Esophagus muscularis mucosa (tissue), 4 donors: ENCODE measurements at regions of chr21 and their contacts with region 1.

Region 1: GRCh38 chr21:40143822-40144525 is 276.7 kb downstream of the PCP4 start:
- DNase-seq: no peak
- H3K4me3 ChIP-seq: no peak overlapping the region
- H3K27ac ChIP-seq: no peak overlapping the region
- H3K4me1 ChIP-seq: peaks cover 0 to 8% (median 2%) of the 10 kb centered on the region in 4 donors
- H3K27me3 ChIP-seq: no peaks in the 10 kb centered on the region
- CTCF ChIP-seq: peak; percentile 71 to 79 (median 76)
- EP300 ChIP-seq: no peak
- POLR2A ChIP-seq: no peak

Region 2: GRCh38 chr21:40385892-40386599 is 242.1 kb after region 1 on chr21:
- intact Hi-C with region 1: loop called (anchors 2 kb)
- DNase-seq: no peak
- H3K4me3 ChIP-seq: peak overlapping the region in 1 of 4 donors; percentile 2
- H3K27ac ChIP-seq: no peak overlapping the region
- H3K4me1 ChIP-seq: peaks cover 0 to 16% (median 10%) of the 10 kb centered on the region in 4 donors
- H3K27me3 ChIP-seq: no peaks in the 10 kb centered on the region
- CTCF ChIP-seq: peak; percentile 74 to 96 (median 87)
- EP300 ChIP-seq: no peak
- POLR2A ChIP-seq: no peak

Region 3: DNA sequence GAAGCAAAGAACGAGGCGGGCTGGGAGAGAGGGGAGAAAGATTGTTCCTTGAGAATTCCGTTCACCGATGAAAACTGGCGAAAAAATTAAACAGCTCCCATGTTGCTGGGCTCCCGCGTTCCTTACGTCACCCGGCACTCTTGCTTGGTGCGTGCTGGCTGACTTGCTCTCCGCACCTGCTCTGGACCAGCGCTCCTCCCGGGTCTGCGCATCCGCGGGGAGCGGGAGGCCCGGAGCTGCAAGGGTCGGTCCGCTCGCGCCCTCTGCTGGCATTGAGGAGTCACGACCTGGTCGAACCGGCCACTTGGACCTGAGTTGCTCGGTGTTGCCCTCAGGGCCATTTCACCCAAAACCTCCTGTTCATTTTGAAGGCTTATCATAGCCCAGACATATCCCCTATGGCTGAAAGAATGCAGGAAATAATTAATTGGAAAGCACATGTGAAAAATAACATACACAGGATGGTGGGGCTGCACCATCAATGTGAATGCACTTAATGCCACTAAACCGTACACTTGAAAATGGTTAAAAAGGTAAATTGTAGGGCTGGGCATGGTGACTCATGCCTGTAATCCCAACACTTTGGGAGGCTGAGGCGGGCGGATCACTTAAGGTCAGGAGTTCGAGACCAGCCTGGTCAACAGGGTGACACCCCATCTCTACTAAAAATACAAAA is 925.1 kb after region 1 on chr21:
- intact Hi-C with region 1: loop called (anchors 5 kb)
- DNase-seq: no peak
- H3K4me3 ChIP-seq: peak overlapping the region; percentile 25 to 39 (median 26)
- H3K27ac ChIP-seq: no peak overlapping the region
- H3K4me1 ChIP-seq: peaks cover 8 to 10% (median 8%) of the 10 kb centered on the region in 4 donors
- H3K27me3 ChIP-seq: peaks cover 0 to 29% (median 0%) of the 10 kb centered on the region in 4 donors
- CTCF ChIP-seq: peak; percentile 64 to 90 (median 79)
- EP300 ChIP-seq: no peak
- POLR2A ChIP-seq: no peak